OCI-LY7 (cell line): ENCODE measurements at regions of chr14 and their contacts with region 1.

Region 1: GRCh38 chr14:90553921-90554336 is 157.1 kb downstream of the CALM1 start:
- DNase-seq: no peak
- H3K4me3 ChIP-seq: no peak overlapping the region
- H3K27ac ChIP-seq: no peak overlapping the region
- H3K4me1 ChIP-seq: no peaks in the 10 kb centered on the region
- CTCF ChIP-seq: no peak

Region 2: GRCh38 chr14:90288651-90289355 is 265.1 kb before region 1 on chr14:
- CTCF ChIA-PET with region 1: no interaction called
- POLR2A ChIA-PET with region 1: no interaction called
- intact Hi-C with region 1: no loop called
- DNase-seq: no peak
- H3K4me3 ChIP-seq: no peak overlapping the region
- H3K27ac ChIP-seq: no peak overlapping the region
- H3K4me1 ChIP-seq: no peaks in the 10 kb centered on the region
- CTCF ChIP-seq: no peak

Region 3: GRCh38 chr14:90569606-90570387 is 15.9 kb after region 1 on chr14:
- CTCF ChIA-PET with region 1: no interaction called
- POLR2A ChIA-PET with region 1: no interaction called
- intact Hi-C with region 1: loop called (anchors 1 kb)
- DNase-seq: no peak
- H3K4me3 ChIP-seq: no peak overlapping the region
- H3K27ac ChIP-seq: no peak overlapping the region
- H3K4me1 ChIP-seq: no peaks in the 10 kb centered on the region
- CTCF ChIP-seq: no peak